ENCODE measurements at regions of chr10 and their contacts with region 1.

Region 1: DNA sequence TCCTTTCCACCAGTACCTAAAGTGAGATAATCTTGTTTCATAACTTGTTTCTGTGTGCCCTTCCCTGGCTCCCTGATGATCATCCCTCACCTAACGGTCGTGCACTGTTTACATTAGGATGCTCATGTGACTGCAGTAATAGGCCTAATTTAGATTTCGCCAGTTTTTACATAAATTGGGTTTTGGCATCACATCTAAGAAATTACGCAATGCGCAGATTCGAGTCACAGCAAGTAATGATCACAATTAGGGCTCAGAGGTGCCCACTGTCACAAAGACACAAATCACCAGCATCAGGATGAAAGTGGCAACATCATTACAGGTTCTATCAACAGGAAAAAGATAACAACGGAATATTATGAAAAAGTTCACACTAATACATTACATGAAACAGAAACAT is 94.7 kb downstream of the LARP4B start:
- DNase-seq: no peak
- H3K4me3 Mint-ChIP-seq: no peak overlapping the region
- H3K27ac Mint-ChIP-seq: no peak overlapping the region
- H3K4me1 Mint-ChIP-seq: no peaks in the 10 kb centered on the region
- H3K27me3 Mint-ChIP-seq: no peaks in the 10 kb centered on the region
- CTCF ChIP-seq: no peak

Region 2: DNA sequence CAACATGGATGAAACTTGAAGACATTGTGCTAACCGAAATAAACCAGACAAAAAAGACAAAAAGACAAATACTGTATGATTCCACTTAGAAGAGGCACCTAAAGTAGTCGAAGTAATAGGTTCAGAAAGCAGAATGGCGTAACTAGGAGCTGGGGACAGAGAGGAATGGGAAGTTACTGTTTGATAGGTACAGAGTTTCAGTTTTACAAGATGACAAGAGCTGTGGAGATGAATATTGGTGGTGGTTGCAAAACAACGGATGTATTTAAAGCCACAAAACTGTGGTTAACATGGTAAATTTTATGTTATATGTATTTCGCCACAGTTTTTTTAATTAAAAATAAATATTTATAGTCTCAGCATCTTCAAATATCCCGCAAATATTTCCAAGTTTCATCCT is 83.2 kb before region 1 on chr10:
- CTCF ChIA-PET with region 1: interaction called, 10 read pairs
- POLR2A ChIA-PET with region 1: no interaction called
- intact Hi-C with region 1: no loop called
- DNase-seq: no peak
- H3K4me3 Mint-ChIP-seq: no peak overlapping the region
- H3K27ac Mint-ChIP-seq: no peak overlapping the region
- H3K4me1 Mint-ChIP-seq: no peaks in the 10 kb centered on the region
- H3K27me3 Mint-ChIP-seq: peaks cover 9% of the 10 kb centered on the region
- CTCF ChIP-seq: no peak